Activated naive CD4-positive, alpha-beta T cell treated with anti-CD3 and anti-CD28 coated beads, Interleukin-2, amount 10 ng/mL, durations not matched to agents 7 days and 5 days (primary cell): ENCODE measurements at regions of chr16 and their contacts with region 1.

Region 1: GRCh38 chr16:77584205-77584859 is 138.0 kb upstream of the NUDT7 start:
- DNase-seq: peak; percentile 58
- H3K4me3 Mint-ChIP-seq: no peak overlapping the region
- H3K27ac Mint-ChIP-seq: no peak overlapping the region
- H3K4me1 Mint-ChIP-seq: no peaks in the 10 kb centered on the region
- H3K27me3 Mint-ChIP-seq: peaks cover 19% of the 10 kb centered on the region

Region 2: DNA sequence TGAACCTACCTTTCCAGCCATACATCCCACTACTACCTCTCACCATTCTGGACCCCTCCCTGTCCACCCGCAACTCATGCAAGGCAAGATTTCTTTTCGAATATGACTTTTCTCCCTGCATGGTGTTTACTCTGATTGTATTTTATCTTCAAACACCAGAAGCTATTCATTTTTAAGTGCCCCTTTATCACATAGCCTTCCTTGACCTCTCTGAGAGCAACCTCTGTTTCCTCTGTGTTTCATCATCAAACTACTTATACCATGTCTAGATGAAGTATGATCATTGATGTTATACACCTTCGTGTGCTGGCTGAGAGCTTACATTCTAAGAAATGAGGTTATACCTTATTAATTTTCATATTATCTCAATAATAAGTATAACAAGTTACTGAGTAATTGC is 353.3 kb before region 1 on chr16:
- CTCF ChIA-PET with region 1: interaction called, 104 read pairs
- DNase-seq: no peak
- H3K4me3 Mint-ChIP-seq: no peak overlapping the region
- H3K27ac Mint-ChIP-seq: no peak overlapping the region
- H3K4me1 Mint-ChIP-seq: peaks cover under 1% of the 10 kb centered on the region
- H3K27me3 Mint-ChIP-seq: peaks cover 3% of the 10 kb centered on the region

Region 3: GRCh38 chr16:77236063-77236511 is 348.2 kb before region 1 on chr16:
- CTCF ChIA-PET with region 1: interaction called, 104 read pairs
- DNase-seq: peak; percentile 92
- H3K4me3 Mint-ChIP-seq: no peak overlapping the region
- H3K27ac Mint-ChIP-seq: no peak overlapping the region
- H3K4me1 Mint-ChIP-seq: peaks cover 3% of the 10 kb centered on the region
- H3K27me3 Mint-ChIP-seq: peaks cover 6% of the 10 kb centered on the region

Region 4: GRCh38 chr16:77569406-77569805 is 14.9 kb before region 1 on chr16:
- CTCF ChIA-PET with region 1: interaction called, 17 read pairs
- DNase-seq: no peak
- H3K4me3 Mint-ChIP-seq: no peak overlapping the region
- H3K27ac Mint-ChIP-seq: no peak overlapping the region
- H3K4me1 Mint-ChIP-seq: no peaks in the 10 kb centered on the region
- H3K27me3 Mint-ChIP-seq: peaks cover 4% of the 10 kb centered on the region